BJ (cell line): ENCODE measurements at regions of chr6 and their contacts with region 1.

Region 1: DNA sequence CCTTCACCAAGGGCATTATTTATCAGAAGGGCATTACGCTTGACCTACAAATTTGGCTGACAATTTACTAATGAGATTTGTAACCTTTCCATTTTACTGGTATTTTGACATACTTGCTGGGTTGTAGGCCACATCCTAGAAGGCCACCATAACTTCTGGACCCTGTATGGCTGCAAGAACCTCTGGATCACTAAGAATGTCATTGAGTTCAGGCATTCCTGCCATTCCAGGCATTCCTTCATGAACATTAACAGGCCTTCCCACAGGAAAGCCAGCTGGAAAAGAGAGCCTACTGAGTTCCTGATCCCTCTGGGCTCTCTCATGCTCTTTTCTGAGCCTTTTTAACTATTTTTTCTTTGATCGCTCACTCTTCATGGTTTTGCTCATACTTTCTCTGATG is 28.4 kb upstream of the SLC35A1 start:
- DNase-seq: no peak
- H3K4me3 ChIP-seq: no peak overlapping the region
- H3K27me3 ChIP-seq: no peaks in the 10 kb centered on the region
- CTCF ChIP-seq: no peak

Region 2: DNA sequence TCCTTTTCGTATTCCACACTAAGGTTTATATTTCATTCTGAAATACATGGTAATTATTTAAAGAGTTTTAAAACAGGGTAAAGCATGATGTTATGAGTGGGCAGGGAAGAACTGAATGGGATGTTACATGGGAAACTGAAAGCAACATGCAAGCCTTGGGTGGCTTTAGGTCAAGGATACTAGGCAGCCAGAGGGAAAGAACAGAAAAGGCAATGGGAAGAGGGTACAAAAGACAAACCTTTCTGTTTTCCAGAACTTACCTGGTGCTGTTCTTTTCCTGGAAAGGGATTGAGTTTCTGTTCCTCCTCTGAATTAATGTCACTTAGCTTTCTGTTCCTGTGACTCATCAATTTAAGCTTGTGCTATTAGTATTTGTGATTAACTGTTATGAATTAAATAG is 193.1 kb before region 1 on chr6:
- CTCF ChIA-PET with region 1: no interaction called
- POLR2A ChIA-PET with region 1: no interaction called
- DNase-seq: no peak
- H3K4me3 ChIP-seq: no peak overlapping the region
- H3K27me3 ChIP-seq: no peaks in the 10 kb centered on the region
- CTCF ChIP-seq: no peak

Region 3: GRCh38 chr6:87825821-87826221 is 381.5 kb after region 1 on chr6:
- CTCF ChIA-PET with region 1: no interaction called
- POLR2A ChIA-PET with region 1: no interaction called
- DNase-seq: no peak
- H3K4me3 ChIP-seq: no peak overlapping the region
- H3K27me3 ChIP-seq: peaks cover 2% of the 10 kb centered on the region; the same call in 1 of the 2 replicates
- CTCF ChIP-seq: no peak

Region 4: GRCh38 chr6:88013015-88013414 is 568.7 kb after region 1 on chr6:
- CTCF ChIA-PET with region 1: no interaction called
- POLR2A ChIA-PET with region 1: interaction called, 10 read pairs
- DNase-seq: no peak
- H3K4me3 ChIP-seq: no peak overlapping the region
- H3K27me3 ChIP-seq: no peaks in the 10 kb centered on the region
- CTCF ChIP-seq: no peak